ENCODE measurements at regions of chr15 and their contacts with region 1.

Region 1: GRCh38 chr15:31326156-31326732 is 391 bp upstream of the KLF13 start:
- DNase-seq: peak; percentile 99
- H3K4me3 ChIP-seq: peak overlapping the region; percentile 88
- H3K27ac ChIP-seq: peak overlapping the region; percentile 100
- H3K4me1 ChIP-seq: peaks cover 7% of the 10 kb centered on the region
- H3K27me3 ChIP-seq: no peaks in the 10 kb centered on the region
- CTCF ChIP-seq: no peak

Region 2: DNA sequence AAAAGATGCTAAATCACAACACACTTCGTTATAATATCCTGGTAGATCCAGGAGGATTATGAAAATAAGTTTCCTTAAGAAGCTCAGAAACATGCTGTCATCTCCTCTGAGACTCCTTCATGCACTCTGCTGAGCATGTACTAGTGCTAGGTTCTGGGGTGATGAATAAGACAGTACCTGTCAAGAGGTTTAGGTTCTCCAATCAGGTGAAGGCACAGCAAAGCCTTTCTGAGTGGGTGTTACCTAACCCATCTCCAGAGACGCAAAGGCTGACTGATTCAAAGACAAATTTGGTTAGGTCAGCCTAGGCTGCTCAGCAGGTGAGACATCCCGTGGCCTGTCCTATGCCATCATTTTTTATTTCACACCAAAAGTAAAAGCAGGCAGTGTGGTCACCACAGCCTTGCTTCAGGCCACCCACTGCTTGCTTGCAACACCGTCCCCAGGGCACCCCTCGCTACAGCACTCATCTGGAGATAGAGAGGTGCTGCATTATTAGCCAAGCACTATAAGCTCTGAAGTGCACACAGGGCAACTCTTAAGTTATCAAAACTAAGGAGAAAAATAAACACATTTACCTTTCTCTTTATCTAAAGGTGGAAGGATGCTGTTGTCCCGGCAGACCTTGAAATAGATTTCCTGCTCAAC is 1621.2 kb before region 1 on chr15:
- intact Hi-C with region 1: no loop called
- DNase-seq: no peak
- H3K4me3 ChIP-seq: no peak overlapping the region
- H3K27ac ChIP-seq: no peak overlapping the region
- H3K4me1 ChIP-seq: no peaks in the 10 kb centered on the region
- H3K27me3 ChIP-seq: no peaks in the 10 kb centered on the region
- CTCF ChIP-seq: no peak

Region 3: GRCh38 chr15:31179693-31180092 is 146.6 kb before region 1 on chr15:
- intact Hi-C with region 1: no loop called
- DNase-seq: no peak
- H3K4me3 ChIP-seq: no peak overlapping the region
- H3K27ac ChIP-seq: no peak overlapping the region
- H3K4me1 ChIP-seq: no peaks in the 10 kb centered on the region
- H3K27me3 ChIP-seq: no peaks in the 10 kb centered on the region
- CTCF ChIP-seq: no peak

Region 4: DNA sequence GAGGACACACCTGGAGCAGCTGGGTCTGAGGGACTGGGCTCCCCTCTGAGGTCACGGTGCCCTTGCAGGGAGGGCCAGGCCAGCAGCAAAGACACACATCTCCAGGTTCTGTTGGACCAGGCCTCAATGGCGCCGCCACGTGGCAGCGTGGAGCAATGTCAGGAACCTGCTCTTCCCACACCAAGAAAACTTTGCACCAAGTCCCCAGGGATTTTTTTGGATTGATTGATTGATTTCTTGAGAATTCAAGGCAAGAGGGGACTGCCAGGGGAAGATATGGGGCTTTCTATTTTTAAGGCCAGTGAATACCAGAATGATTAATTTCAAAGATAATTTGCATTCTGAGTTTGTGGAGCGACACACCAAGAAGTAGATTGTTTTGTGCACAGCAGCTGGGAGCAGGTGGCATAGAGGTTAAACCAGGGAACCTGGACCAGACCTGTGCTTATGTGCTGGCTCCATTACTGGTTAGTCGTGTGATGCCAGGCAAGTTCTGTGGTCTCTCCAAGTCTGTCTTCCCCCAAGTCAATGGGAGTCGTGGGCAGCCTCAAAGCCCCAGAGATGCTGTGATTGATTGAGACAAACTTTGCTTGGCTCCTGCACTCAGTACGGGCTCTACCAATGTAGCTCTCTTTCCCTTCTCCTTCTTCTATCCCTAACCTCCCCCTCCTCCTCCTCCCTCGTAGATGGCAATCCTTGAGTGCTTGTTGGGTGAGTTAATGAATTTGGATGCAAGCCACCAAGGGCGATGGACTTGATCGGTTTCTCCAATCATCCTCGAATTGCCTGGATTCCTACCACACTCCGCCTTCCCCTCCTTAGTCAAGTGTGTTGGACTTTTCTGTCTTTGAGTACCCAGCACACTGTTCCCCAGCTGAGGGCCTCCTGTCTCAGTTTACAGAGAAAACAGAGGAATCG is 128.5 kb before region 1 on chr15:
- intact Hi-C with region 1: no loop called
- DNase-seq: no peak
- H3K4me3 ChIP-seq: no peak overlapping the region
- H3K27ac ChIP-seq: no peak overlapping the region
- H3K4me1 ChIP-seq: no peaks in the 10 kb centered on the region
- H3K27me3 ChIP-seq: no peaks in the 10 kb centered on the region
- CTCF ChIP-seq: peak; percentile 69

Region 5: GRCh38 chr15:31215490-31216214 is 110.6 kb before region 1 on chr15:
- intact Hi-C with region 1: loop called (anchors 5 kb)
- DNase-seq: peak; percentile 90
- H3K4me3 ChIP-seq: peak overlapping the region; percentile 45
- H3K27ac ChIP-seq: peak overlapping the region; percentile 94
- H3K4me1 ChIP-seq: peaks cover 11% of the 10 kb centered on the region
- H3K27me3 ChIP-seq: no peaks in the 10 kb centered on the region
- CTCF ChIP-seq: peak; percentile 85

Region 6: DNA sequence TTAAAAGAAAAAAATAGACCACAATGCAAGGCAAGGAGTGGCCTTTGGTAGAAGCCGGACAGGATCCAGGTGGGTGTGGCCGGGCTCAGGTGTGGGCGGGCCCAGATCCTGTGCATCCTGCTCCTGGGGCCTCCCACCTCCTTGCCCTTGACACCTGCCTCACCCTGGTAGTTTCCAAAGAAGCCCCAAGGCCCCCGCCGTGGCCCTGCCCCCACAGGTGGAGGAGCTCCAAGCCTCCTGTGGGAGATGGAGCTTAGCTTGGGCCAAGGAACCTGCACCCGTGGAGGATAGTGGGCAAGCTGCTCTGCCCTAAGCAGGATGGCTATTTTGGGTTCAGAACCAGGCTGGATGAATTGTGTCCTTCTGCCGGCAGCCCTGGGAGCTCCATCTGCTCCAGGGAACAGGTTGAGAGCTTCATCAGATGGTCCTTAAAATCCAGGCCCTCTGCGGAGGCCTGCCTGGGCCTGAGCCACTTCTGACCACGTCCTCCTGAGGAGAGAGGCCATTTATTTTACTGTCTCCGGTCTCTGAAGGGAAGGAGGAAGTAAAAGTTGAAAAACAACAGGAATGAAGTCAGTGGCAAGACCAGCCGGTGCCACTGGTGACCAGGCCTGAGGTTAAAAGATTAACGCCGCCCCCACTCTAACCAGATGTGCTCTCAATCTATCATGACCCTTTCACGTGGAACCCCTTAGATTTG is 53.5 kb before region 1 on chr15:
- intact Hi-C with region 1: loop called (anchors 10 kb)
- DNase-seq: peak; percentile 94
- H3K4me3 ChIP-seq: no peak overlapping the region
- H3K27ac ChIP-seq: peak overlapping the region; percentile 31
- H3K4me1 ChIP-seq: peaks cover 27% of the 10 kb centered on the region
- H3K27me3 ChIP-seq: no peaks in the 10 kb centered on the region
- CTCF ChIP-seq: no peak

Region 7: GRCh38 chr15:31391687-31392671 is 65.7 kb after region 1 on chr15:
- intact Hi-C with region 1: loop called (anchors 5 kb)
- DNase-seq: peak; percentile 90
- H3K4me3 ChIP-seq: peak overlapping the region; percentile 65
- H3K27ac ChIP-seq: peak overlapping the region; percentile 85
- H3K4me1 ChIP-seq: peaks cover 6% of the 10 kb centered on the region
- H3K27me3 ChIP-seq: no peaks in the 10 kb centered on the region
- CTCF ChIP-seq: no peak

Region 8: DNA sequence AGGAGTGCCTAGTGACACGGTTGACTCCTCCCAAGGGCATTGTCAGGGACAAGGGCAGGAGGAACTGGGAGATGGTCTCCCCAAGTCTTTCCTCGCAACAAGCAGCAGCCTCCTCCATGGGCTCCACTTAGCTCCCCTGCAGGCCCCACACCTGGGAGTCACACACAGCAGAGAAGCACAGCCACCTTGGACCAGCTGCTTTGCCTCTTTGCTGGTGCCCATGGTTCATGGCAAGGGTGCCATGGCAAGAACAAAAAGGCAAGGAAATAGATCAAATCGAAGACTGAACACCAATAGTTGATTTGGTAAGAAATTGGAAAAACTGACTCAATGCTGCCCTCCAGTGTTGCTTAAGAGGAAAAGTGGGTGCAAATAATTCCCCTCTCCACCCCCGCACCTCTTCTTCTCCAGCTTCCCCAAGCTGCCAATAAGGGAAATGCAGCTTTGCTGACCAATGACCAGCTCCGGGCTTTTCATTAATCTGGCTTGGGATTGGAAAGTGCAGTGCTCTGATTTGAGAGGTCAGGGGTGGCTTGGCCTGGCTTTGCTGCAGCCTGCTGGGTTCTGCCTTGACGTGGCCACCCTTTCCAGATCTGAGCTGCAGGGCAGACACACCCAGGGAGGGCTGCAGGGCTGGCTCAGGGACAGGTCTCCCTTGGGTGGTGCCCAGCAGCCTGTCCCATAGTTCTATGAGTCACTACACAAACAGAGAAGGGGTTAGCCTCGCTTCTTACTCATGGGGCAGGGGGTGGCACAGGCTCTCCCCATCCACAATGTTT is 162.4 kb after region 1 on chr15:
- intact Hi-C with region 1: loop called (anchors 10 kb)
- DNase-seq: peak; percentile 81
- H3K4me3 ChIP-seq: no peak overlapping the region
- H3K27ac ChIP-seq: no peak overlapping the region
- H3K4me1 ChIP-seq: peaks cover 15% of the 10 kb centered on the region
- H3K27me3 ChIP-seq: no peaks in the 10 kb centered on the region
- CTCF ChIP-seq: peak; percentile 79

Measured in colonic mucosa (tissue), 4 donors.